ENCODE measurements at regions of chr11 and their contacts with region 1.

Region 1: GRCh38 chr11:84398017-84398626 is 1112.0 kb upstream of the CCDC90B start:
- DNase-seq: no peak
- ATAC-seq: peak in 3 of 4 donors; percentile 55 to 66 (median 60)
- H3K4me3 ChIP-seq: no peak overlapping the region
- H3K27ac ChIP-seq: no peak overlapping the region
- H3K4me1 ChIP-seq: no peaks in the 10 kb centered on the region
- H3K27me3 ChIP-seq: no peaks in the 10 kb centered on the region
- CTCF ChIP-seq: peak in 2 of 4 donors; percentile 9 to 11

Region 2: GRCh38 chr11:84455691-84456090 is 57.6 kb after region 1 on chr11:
- intact Hi-C with region 1: no loop called
- DNase-seq: no peak
- ATAC-seq: no peak
- H3K4me3 ChIP-seq: no peak overlapping the region
- H3K27ac ChIP-seq: no peak overlapping the region
- H3K4me1 ChIP-seq: no peaks in the 10 kb centered on the region
- H3K27me3 ChIP-seq: no peaks in the 10 kb centered on the region
- CTCF ChIP-seq: no peak

Region 3: DNA sequence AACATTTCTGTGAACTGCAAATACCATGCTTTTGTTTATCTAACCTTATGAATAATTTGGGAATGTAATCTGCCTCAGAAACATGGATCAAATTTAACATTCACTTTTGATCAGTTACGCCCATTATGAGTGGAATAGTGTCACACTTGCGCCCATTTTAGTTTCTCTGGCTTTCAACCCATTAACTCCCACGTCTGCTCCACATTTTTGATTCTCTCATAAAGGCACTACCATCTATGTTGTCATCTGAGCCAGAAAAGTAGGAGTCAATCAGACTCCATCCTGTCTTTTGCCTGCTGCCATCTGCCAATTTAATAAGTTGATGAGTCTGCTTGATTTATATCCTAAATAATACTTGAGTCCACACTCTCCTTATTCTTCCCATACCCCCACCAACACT is 138.3 kb after region 1 on chr11:
- intact Hi-C with region 1: loop called in 1 of 3 experiments (anchors 10 kb)
- DNase-seq: no peak
- ATAC-seq: no peak
- H3K4me3 ChIP-seq: no peak overlapping the region
- H3K27ac ChIP-seq: no peak overlapping the region
- H3K4me1 ChIP-seq: no peaks in the 10 kb centered on the region
- H3K27me3 ChIP-seq: no peaks in the 10 kb centered on the region
- CTCF ChIP-seq: no peak